ENCODE measurements at regions of chr9 and their contacts with region 1.

Region 1: DNA sequence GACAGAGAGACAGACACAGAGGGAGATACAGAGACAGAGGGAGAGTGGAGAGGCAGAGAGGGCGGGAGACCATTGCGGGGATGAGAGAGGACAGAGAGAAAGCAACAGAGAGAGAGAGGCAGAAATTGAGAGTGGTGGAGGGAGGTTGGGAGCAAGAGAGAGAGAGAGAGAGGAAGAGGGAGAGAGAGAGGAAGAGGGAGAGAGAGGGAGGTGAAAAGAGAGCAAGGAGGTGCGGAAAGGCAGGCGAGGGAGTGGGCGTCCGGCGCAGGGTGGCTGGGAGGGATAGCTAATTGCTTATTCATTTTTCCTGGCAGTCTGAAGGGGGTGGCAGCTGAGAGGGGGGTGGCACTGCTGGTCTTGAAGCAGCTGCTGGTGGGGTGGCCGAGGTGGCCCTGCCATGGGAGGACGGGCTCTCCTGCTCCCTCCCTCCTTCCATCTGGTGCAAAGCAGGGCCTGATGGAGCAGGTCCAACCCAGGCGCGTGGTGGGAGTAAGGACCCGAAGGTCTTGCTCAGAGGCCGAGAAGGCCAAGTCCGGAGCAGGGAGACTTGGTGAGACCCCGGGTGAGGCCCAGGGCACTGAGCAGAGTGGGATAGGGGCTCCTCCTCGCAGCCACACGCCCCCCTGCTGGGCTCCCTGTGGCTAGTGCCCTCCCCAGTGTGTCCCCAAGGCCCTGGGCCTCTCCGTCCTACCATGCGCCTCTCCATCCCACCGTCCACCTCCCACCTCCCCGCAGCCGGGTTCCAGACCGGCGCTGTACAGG is 25.3 kb upstream of the RNU6ATAC start:
- DNase-seq: peak in 1 of 2 donors; percentile 83
- H3K4me3 ChIP-seq: no peak overlapping the region
- CTCF ChIP-seq: no peak
- POLR2A ChIP-seq: no peak

Region 2: GRCh38 chr9:134178768-134179551 is 10.7 kb before region 1 on chr9:
- intact Hi-C with region 1: no loop called
- DNase-seq: peak in 1 of 2 donors; percentile 85
- H3K4me3 ChIP-seq: no peak overlapping the region
- CTCF ChIP-seq: no peak
- POLR2A ChIP-seq: no peak

Region 3: GRCh38 chr9:134243778-134244467 is 54.3 kb after region 1 on chr9:
- intact Hi-C with region 1: no loop called
- DNase-seq: peak in 1 of 2 donors; percentile 41
- H3K4me3 ChIP-seq: no peak overlapping the region
- CTCF ChIP-seq: no peak
- POLR2A ChIP-seq: no peak

Region 4: GRCh38 chr9:134316449-134317160 is 127.0 kb after region 1 on chr9:
- intact Hi-C with region 1: loop called (anchors 10 kb)
- DNase-seq: peak in 1 of 2 donors; percentile 79
- H3K4me3 ChIP-seq: no peak overlapping the region
- CTCF ChIP-seq: no peak
- POLR2A ChIP-seq: no peak

Region 5: DNA sequence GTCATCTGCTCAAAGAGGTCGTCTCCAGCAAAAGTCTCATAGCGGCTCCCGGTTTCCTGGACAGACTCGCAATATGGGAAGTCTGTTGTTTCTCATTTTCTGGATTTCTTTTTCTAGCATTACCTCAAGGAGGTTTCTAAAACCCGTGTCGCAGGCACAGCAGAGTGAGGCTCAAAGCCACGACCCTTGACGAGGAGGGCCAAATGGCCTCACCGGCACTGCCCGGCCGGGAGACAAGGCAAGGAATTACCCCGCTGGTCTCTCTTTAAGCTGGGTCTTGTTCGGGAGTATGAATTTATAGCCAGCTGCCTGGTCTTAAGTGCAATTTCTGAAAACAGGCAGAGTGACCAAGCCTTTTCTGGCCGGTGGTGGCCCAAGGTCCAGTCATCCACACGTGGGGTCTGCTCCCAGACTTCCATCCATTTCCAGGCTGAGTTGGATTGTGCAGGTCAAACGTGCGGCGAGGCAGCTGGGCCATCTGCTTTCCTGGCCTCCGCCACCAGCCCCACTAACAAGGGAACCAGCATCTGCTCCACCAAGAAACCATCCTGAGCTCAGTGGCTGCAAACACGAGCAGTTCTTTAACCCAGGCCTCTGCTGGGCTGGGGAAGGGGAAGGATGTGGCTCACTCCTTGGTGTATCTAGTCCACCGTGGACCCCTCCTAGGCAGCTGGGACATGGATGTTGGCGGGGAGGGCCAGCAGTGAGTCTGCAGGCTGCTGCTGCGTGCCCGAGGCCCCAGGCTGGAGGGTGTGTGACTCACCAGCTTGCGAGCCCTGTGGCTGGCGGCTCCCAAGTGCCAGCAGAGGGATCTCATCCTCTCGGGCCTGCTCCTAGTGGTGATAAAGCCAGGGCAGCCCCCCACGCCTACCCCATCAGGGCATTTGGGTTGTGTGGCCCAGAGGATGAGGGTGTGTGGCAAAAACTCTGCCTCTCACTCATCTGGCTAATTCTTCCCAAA is 396.4 kb after region 1 on chr9:
- intact Hi-C with region 1: no loop called
- DNase-seq: peak in 1 of 2 donors; percentile 70
- H3K4me3 ChIP-seq: no peak overlapping the region
- CTCF ChIP-seq: no peak
- POLR2A ChIP-seq: no peak